Transverse colon (tissue), 4 donors: ENCODE measurements at regions of chr3 and their contacts with region 1.

Region 1: GRCh38 chr3:189947948-189948723 is 172.6 kb downstream of the P3H2 start:
- DNase-seq: no peak
- H3K4me3 ChIP-seq: no peak overlapping the region
- H3K27ac ChIP-seq: no peak overlapping the region
- H3K4me1 ChIP-seq: peaks cover 0 to 14% (median 10%) of the 10 kb centered on the region in 4 donors
- H3K27me3 ChIP-seq: no peaks in the 10 kb centered on the region
- CTCF ChIP-seq: peak; percentile 22 to 65 (median 42)
- EP300 ChIP-seq: no peak
- POLR2A ChIP-seq: no peak

Region 2: GRCh38 chr3:189270248-189270832 is 677.8 kb before region 1 on chr3:
- in situ Hi-C with region 1: loop called (anchors 10 to 25 kb)
- intact Hi-C with region 1: no loop called
- DNase-seq: peak; percentile 78
- H3K4me3 ChIP-seq: no peak overlapping the region
- H3K27ac ChIP-seq: no peak overlapping the region
- H3K4me1 ChIP-seq: peaks cover 0 to 5% (median 0%) of the 10 kb centered on the region in 4 donors
- H3K27me3 ChIP-seq: no peaks in the 10 kb centered on the region
- CTCF ChIP-seq: peak; percentile 42 to 84 (median 59)
- EP300 ChIP-seq: no peak
- POLR2A ChIP-seq: no peak

Region 3: DNA sequence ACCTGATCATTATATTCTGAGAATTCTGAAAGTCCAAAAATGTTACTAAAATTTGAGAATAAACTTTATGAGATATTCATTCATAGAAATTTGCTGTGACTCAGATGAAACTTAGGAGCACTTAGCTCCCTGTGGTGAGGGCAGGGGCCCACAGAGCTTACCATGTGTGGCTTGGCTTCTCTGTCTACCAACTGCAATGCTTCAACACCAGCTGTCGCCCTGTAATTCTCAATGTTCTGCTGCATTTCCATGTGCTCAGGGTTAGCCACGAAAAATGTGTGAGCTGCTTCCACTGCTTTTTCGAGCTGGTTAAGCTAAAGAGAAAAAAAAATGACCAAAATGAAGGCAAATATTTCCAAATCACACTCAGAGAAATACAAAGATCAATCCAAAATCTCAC is 47.0 kb after region 1 on chr3:
- in situ Hi-C with region 1: no loop called
- intact Hi-C with region 1: no loop called
- DNase-seq: no peak
- H3K4me3 ChIP-seq: no peak overlapping the region
- H3K27ac ChIP-seq: no peak overlapping the region
- H3K4me1 ChIP-seq: no peaks in the 10 kb centered on the region
- H3K27me3 ChIP-seq: no peaks in the 10 kb centered on the region
- CTCF ChIP-seq: no peak
- EP300 ChIP-seq: no peak
- POLR2A ChIP-seq: no peak